ENCODE measurements at regions of chr11 and their contacts with region 1.

Region 1: DNA sequence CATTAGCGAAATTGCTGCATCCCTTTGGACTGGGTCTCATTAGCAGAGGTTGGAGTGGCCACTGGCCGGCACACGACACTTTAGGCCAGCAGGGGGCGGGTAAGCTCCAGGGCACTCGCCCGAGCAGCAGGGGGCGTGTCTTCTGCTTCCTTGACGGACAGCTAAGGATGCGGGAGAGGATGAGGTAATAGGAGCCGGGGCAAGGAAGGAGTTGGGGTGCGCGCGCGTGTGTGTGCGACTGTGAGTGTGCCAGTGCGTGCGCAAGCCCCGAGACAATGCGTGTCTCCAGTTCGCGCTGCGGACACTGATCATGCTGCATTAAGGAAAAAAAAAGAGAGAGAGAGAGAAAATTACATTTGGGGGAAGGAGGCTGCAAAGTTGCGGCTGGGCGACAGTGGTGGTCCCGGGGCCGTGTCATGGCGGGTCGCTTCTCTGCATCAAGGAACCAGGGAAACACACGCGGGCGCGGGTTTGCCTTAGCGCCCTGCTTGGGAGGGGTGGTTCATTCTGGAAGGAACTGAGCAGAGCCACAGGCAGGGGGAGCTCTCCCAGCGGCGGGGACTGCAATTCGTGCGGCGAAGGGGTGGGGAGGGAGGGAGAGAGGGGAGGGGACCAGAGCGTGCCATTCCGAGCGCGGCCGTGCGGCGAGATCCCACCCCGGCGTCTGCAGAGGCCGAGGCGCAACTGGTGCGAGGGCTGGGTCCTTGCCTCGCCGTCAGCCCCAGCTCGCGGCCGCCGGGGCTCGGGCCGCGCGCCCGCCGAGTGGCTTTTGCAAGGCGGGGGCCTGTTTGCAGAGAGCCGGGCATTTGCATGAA is at the start of gene DTX4:
- DNase-seq: peak; percentile 94
- H3K4me3 ChIP-seq: peak within 1 kb of the TSS in 2 of 3 donors; percentile 49 to 57
- H3K27ac ChIP-seq: peak within 1 kb of the TSS in 2 of 3 donors; percentile 66 to 78
- H3K4me1 ChIP-seq: peaks cover 17 to 18% of the 10 kb centered on the region in 2 donors
- H3K27me3 ChIP-seq: no peaks in the 10 kb centered on the region
- CTCF ChIP-seq: peak; percentile 73 to 97 (median 93)
- POLR2A ChIP-seq: peak in 1 of 2 donors; percentile 60
- total RNA-seq, gene DTX4: 9.6 to 29.3 (median 17.5) TPM

Region 2: DNA sequence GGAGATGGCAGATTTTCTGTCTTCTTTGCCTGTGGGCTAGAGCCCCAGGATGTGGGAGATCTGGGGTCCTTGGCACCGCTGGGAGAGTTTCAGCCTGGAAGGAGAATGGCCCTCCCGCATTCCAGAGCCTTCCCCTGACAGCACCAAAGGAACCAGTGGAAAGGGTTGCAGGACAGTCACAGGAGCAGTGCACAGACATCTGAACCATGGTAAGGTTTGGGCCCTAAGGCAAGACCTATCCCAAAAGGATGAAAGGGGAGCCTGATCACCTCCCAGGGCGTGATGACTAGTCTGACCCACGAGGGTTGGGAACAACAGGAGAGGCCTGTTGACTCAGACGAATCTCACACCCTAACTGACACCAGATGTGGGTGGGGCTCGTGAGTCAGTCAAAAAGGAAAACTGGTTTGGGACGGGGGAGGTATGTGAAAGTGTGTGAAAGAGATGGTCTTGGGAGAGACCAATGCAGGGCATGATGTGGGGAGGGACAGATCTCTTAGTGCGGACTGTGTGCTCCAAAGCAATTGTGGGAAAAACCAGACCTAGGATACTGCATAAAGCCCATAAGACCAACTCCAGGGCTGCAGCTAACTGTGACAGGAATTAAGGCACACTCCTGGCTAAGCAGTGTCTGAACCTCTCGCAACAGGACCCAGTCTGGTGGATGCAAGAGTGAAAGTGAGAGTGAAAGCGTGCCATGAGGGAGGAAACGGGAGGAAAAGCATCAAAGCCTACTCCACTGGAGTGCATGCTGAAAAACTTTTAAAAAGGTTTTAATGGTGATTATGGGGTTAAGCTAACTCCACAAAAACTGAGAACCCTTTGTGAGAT is 400.9 kb before region 1 on chr11:
- intact Hi-C with region 1: no loop called
- DNase-seq: no peak
- H3K4me3 ChIP-seq: no peak overlapping the region
- H3K27ac ChIP-seq: no peak overlapping the region
- H3K4me1 ChIP-seq: no peaks in the 10 kb centered on the region
- H3K27me3 ChIP-seq: no peaks in the 10 kb centered on the region
- CTCF ChIP-seq: no peak
- POLR2A ChIP-seq: no peak

Region 3: DNA sequence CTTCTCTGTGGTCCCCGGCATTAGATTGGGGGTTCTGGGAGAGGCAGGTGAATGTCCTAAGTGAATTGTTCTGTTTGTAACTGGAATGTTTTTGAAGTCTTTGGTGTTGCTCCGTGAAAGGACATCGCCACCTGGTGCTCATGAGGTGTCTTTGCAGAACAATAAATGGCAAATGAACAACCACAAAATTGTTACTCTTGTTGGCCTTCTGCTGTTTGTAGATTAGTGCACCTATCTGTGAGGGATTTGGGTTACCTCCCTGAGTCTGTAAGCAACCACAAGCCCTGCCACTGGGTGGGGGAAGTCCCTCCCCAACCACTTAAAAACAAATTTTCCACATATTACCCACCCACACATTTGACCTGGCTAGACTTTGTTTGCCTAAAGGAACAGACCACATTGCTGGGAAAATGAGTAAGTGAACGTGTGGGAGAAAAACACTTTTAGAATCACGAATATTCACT is 36.3 kb after region 1 on chr11:
- intact Hi-C with region 1: loop called (anchors 5 kb)
- DNase-seq: peak; percentile 47 to 63
- H3K4me3 ChIP-seq: no peak overlapping the region
- H3K27ac ChIP-seq: peak overlapping the region in 2 of 3 donors; percentile 54 to 64
- H3K4me1 ChIP-seq: peaks cover 8 to 26% of the 10 kb centered on the region in 2 donors
- H3K27me3 ChIP-seq: no peaks in the 10 kb centered on the region
- CTCF ChIP-seq: peak; percentile 28 to 80 (median 76)
- POLR2A ChIP-seq: peak in 1 of 2 donors; percentile 7

Region 4: GRCh38 chr11:59429924-59430516 is 258.3 kb after region 1 on chr11:
- intact Hi-C with region 1: loop called (anchors 5 kb)
- DNase-seq: no peak
- H3K4me3 ChIP-seq: no peak overlapping the region
- H3K27ac ChIP-seq: no peak overlapping the region
- H3K4me1 ChIP-seq: no peaks in the 10 kb centered on the region
- H3K27me3 ChIP-seq: no peaks in the 10 kb centered on the region
- CTCF ChIP-seq: peak in 5 of 6 experiments; percentile 16 to 57 (median 50)
- POLR2A ChIP-seq: no peak